GM10248 (cell line): ENCODE measurements at regions of chr17 and their contacts with region 1.

Region 1: GRCh38 chr17:50956750-50957523 is 90.8 kb upstream of the TOB1 start:
- DNase-seq: peak; percentile 74
- CTCF ChIP-seq: peak; percentile 82

Region 2: GRCh38 chr17:50919321-50920085 is 37.4 kb before region 1 on chr17:
- CTCF ChIA-PET with region 1: no interaction called
- POLR2A ChIA-PET with region 1: no interaction called
- DNase-seq: peak; percentile 75
- CTCF ChIP-seq: no peak

Region 3: DNA sequence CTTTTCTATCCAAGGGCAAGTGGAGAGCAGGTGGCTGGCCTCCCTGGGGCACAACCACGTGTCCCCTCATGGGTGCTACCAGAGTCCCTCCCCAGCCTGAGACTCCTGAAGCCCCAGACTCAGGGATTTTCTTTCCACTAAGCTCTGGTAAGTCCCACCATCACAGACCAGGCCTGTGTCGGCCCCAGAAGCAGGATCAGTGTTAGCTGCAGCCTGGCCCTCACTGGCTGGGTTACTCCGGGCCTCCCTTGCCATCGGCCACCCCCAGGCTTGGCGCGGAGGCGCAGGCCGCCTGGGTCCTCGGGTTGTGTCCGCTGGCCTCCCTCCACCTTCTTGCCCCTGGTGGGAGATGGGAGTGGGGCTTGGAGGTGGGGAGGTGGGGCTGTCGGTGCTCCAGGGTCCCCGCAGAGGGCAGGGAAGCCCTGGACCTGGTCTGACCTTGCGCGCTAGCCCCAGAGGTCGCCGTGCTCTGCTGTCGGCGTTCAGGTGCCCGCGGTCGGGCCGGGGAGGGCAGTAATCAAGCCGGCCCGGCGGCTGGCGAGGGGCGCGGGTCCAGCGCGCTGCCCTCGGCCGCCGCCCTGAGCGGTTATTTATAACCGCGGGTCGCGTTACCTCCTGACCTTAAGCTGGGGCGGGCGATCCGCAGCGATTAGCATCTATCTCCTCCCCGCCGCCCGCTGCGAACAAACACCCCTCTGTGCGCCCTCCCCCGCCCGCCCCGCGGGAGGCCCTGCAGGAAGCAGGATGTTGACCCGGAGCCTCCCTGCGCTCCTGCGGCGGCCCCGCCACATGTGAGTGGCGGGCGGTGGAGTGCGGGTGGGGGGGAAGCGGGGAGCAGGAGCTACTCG is 12.7 kb before region 1 on chr17:
- CTCF ChIA-PET with region 1: interaction called, 13 read pairs
- POLR2A ChIA-PET with region 1: no interaction called
- DNase-seq: peak; percentile 71
- CTCF ChIP-seq: no peak